ENCODE measurements at regions of chr1 and their contacts with region 1.

Region 1: GRCh38 chr1:209899948-209900347 is 38.1 kb upstream of the SYT14 start:
- DNase-seq: no peak
- H3K4me3 ChIP-seq: no peak overlapping the region
- CTCF ChIP-seq: no peak

Region 2: DNA sequence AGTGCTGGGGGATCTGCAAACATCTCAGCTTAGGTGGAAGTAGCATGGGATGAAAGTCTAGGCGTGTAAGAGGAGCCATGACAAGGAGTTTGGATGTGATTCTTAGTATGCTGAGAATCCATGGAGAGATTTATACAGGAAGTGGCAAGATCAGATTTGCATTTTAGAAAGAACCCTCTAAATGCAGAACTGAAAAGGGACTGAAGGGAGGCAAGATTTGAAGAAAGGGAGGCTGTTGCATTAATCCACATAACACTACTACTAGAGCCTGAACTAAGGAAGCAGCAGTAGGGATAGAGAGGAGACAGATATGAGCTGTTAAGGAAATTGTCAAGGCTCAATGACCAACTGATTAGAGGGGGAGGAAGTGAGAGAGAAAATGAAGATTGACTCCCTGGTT is 125.4 kb before region 1 on chr1:
- CTCF ChIA-PET with region 1: no interaction called
- POLR2A ChIA-PET with region 1: no interaction called
- DNase-seq: no peak
- H3K4me3 ChIP-seq: no peak overlapping the region
- CTCF ChIP-seq: no peak

Region 3: DNA sequence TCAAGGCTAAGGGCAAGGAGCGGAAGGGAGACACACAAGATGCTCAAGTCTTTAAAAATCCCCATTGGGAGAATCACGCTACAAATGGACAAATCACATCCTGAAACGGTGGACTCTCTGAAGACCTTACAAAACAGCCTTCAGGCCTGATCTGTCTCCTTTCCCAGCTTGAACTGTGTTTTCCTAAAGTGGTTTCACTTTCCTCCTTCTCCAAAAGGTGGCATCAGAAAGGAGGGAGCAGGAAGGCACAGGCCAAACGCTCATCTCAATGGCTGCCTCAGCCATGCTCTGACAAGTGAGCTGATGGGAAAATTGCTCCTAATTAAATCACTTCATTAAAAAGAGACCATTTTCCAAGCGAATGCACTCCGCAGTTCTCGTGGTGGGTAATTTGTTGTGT is 24.4 kb before region 1 on chr1:
- CTCF ChIA-PET with region 1: interaction called, 13 read pairs
- POLR2A ChIA-PET with region 1: no interaction called
- DNase-seq: peak; percentile 36
- H3K4me3 ChIP-seq: peak overlapping the region; percentile 19; the same call in 1 of the 2 replicates
- CTCF ChIP-seq: peak; percentile 78

Region 4: DNA sequence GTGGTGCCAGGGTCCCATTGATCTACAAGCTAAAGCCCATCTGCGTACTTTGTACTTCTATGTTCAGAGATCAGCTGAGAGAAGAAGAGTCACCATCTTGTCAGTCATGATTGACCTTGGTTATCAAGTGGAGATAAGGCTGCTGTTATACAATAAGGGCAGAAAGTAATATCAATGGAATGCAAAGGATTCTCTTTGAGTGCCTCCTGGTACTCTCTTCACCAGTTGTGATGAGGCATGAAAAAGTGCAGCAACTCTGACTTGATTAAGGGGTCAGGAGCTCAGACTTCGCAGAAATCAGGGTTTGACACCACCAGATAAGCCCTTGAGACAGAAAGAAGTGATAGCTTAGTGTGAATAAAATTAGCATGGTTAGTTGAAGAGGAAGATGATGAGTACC is 12.4 kb after region 1 on chr1:
- CTCF ChIA-PET with region 1: interaction called, 10 read pairs
- POLR2A ChIA-PET with region 1: interaction called, 3 read pairs
- DNase-seq: no peak
- H3K4me3 ChIP-seq: no peak overlapping the region
- CTCF ChIP-seq: no peak